ENCODE measurements at regions of chr22 and their contacts with region 1.

Region 1: GRCh38 chr22:21952586-21953571 is at the start of gene PPM1F:
- DNase-seq: no peak
- ATAC-seq: peak; percentile 90
- H3K4me3 ChIP-seq: peak within 1 kb of the TSS; percentile 62 to 82
- H3K27ac ChIP-seq: peak within 1 kb of the TSS; percentile 61; the same call in 1 of the 2 replicates
- H3K4me1 ChIP-seq: peaks cover 4 to 17% of the 10 kb centered on the region in 2 experiments; a peak in 2 of 4 replicates
- H3K27me3 ChIP-seq: no peaks in the 10 kb centered on the region
- CTCF ChIP-seq: peak; percentile 58 to 80 (median 74)
- POLR2A ChIP-seq: peak; percentile 47
- RAD21 ChIP-seq: peak; percentile 65
- total RNA-seq, gene PPM1F: 27.3 TPM

Region 2: GRCh38 chr22:21938071-21938822 is 14.6 kb before region 1 on chr22:
- CTCF ChIA-PET with region 1: interaction called, 19 read pairs
- POLR2A ChIA-PET with region 1: no interaction called
- RAD21 ChIA-PET with region 1: interaction called in 1 of 2 experiments, 5 read pairs
- intact Hi-C with region 1: no loop called
- DNase-seq: peak; percentile 69
- ATAC-seq: peak; percentile 91
- H3K4me3 ChIP-seq: peak overlapping the region; percentile 52 to 58
- H3K27ac ChIP-seq: peak overlapping the region; percentile 91
- H3K4me1 ChIP-seq: peaks cover 25 to 44% of the 10 kb centered on the region in 2 experiments
- H3K27me3 ChIP-seq: no peaks in the 10 kb centered on the region
- CTCF ChIP-seq: peak; percentile 93 to 98 (median 94)
- POLR2A ChIP-seq: no peak
- RAD21 ChIP-seq: peak; percentile 81

Region 3: GRCh38 chr22:21972293-21972779 is 19.5 kb after region 1 on chr22:
- CTCF ChIA-PET with region 1: interaction called, 13 read pairs
- POLR2A ChIA-PET with region 1: no interaction called
- RAD21 ChIA-PET with region 1: no interaction called
- intact Hi-C with region 1: no loop called
- DNase-seq: no peak
- ATAC-seq: peak; percentile 85
- H3K4me3 ChIP-seq: no peak overlapping the region
- H3K27ac ChIP-seq: no peak overlapping the region
- H3K4me1 ChIP-seq: no peaks in the 10 kb centered on the region
- H3K27me3 ChIP-seq: no peaks in the 10 kb centered on the region
- CTCF ChIP-seq: peak in 2 of 3 experiments; percentile 92 to 98; a peak in 4 of 6 replicates
- POLR2A ChIP-seq: no peak
- RAD21 ChIP-seq: no peak